Activated naive CD4-positive, alpha-beta T cell treated with anti-CD3 and anti-CD28 coated beads for 36 hours (primary cell): ENCODE measurements at regions of chr19 and their contacts with region 1.

Region 1: GRCh38 chr19:16473875-16474392 is 2.2 kb upstream of the EPS15L1 start:
- DNase-seq: no peak
- H3K4me3 Mint-ChIP-seq: no peak overlapping the region
- H3K27ac Mint-ChIP-seq: no peak overlapping the region
- H3K4me1 Mint-ChIP-seq: peaks cover 21% of the 10 kb centered on the region
- H3K27me3 Mint-ChIP-seq: no peaks in the 10 kb centered on the region

Region 2: GRCh38 chr19:16495982-16496612 is 22.2 kb after region 1 on chr19 and contains the starts of genes C19orf44 and CALR3:
- CTCF ChIA-PET with region 1: no interaction called
- intact Hi-C with region 1: loop called (anchors 1 kb)
- DNase-seq: peak; percentile 98
- H3K4me3 Mint-ChIP-seq: peak within 1 kb of the TSS; percentile 95
- H3K27ac Mint-ChIP-seq: peak within 1 kb of the TSS; percentile 64
- H3K4me1 Mint-ChIP-seq: peaks cover 15% of the 10 kb centered on the region
- H3K27me3 Mint-ChIP-seq: no peaks in the 10 kb centered on the region
- total RNA-seq, gene C19orf44: 2.1 to 2.6 TPM
- total RNA-seq, gene CALR3: not detected

Region 3: GRCh38 chr19:16518483-16519229 is 44.7 kb after region 1 on chr19:
- CTCF ChIA-PET with region 1: no interaction called
- intact Hi-C with region 1: no loop called
- DNase-seq: no peak
- H3K4me3 Mint-ChIP-seq: no peak overlapping the region
- H3K27ac Mint-ChIP-seq: no peak overlapping the region
- H3K4me1 Mint-ChIP-seq: no peaks in the 10 kb centered on the region
- H3K27me3 Mint-ChIP-seq: no peaks in the 10 kb centered on the region